B cell (primary cell): ENCODE measurements at regions of chr6 and their contacts with region 1.

Region 1: GRCh38 chr6:35452186-35453090 is at the start of gene FANCE:
- DNase-seq: peak; percentile 90
- ATAC-seq: peak; percentile 92
- H3K4me3 ChIP-seq: peak within 1 kb of the TSS; percentile 70 to 89 (median 79)
- H3K4me3 Mint-ChIP-seq: peak within 1 kb of the TSS; percentile 86
- H3K27ac ChIP-seq: peak within 1 kb of the TSS; percentile 23 to 25
- H3K27ac Mint-ChIP-seq: peak within 1 kb of the TSS; percentile 63
- H3K4me1 ChIP-seq: peaks cover 14 to 21% of the 10 kb centered on the region in 2 donors
- H3K4me1 Mint-ChIP-seq: peaks cover 33% of the 10 kb centered on the region
- H3K27me3 ChIP-seq: no peaks in the 10 kb centered on the region
- H3K27me3 Mint-ChIP-seq: no peaks in the 10 kb centered on the region
- CTCF ChIP-seq: no peak
- total RNA-seq, gene FANCE: 12.7 and 12.8 TPM in 2 replicates

Region 2: DNA sequence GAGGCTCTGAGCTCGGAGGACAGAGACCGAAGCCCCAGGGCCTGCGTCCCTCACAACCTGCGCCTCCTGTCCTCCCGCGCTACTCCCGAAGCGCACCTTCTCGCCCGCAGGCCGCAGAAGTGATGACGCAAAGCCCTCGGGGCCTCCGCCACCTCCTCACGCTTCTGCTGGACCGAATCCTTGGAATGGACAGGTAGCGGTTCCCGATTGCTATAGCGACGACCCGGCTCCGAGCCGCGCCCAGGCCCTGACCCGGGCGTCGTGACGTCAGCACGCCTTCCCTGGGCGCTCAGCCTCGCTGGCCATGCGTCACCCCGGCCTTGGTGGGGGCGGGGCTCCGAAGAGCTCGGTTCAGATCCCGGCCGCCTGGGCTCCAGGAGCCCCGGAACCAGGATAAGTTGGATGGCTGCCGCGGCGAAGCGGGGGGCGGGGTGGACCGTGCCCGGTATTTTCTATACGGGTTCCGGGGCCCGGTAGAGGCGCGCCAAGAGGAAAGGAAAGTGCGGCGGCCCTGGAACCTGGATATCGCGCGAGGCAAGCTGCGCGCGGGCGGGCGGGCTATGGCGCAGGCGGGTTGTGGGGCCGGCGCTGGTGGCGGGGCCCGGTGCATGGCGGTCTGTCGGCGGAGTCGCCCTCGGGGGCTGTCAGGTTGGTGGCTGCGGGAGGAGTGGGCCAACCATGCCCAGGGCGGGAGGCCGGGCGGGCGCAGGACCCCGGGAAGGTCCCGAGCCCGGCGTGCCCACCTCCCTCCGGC is 193.1 kb before region 1 on chr6 and contains the start of gene ZNF76:
- CTCF ChIA-PET with region 1: interaction called, 3 read pairs
- POLR2A ChIA-PET with region 1: interaction called, 4 read pairs
- intact Hi-C with region 1: loop called (anchors 1 kb)
- DNase-seq: peak; percentile 97
- ATAC-seq: peak; percentile 81
- H3K4me3 ChIP-seq: peak within 1 kb of the TSS; percentile 63 to 90 (median 81)
- H3K4me3 Mint-ChIP-seq: peak within 1 kb of the TSS; percentile 99
- H3K27ac ChIP-seq: peak within 1 kb of the TSS; percentile 97 to 98
- H3K27ac Mint-ChIP-seq: peak within 1 kb of the TSS; percentile 98
- H3K4me1 ChIP-seq: peaks cover 21 to 30% of the 10 kb centered on the region in 2 donors
- H3K4me1 Mint-ChIP-seq: peaks cover 47% of the 10 kb centered on the region
- H3K27me3 ChIP-seq: no peaks in the 10 kb centered on the region
- H3K27me3 Mint-ChIP-seq: no peaks in the 10 kb centered on the region
- CTCF ChIP-seq: no peak
- total RNA-seq, gene ZNF76: 96.9 and 107 TPM in 2 replicates

Region 3: GRCh38 chr6:35327349-35328027 is 125.0 kb before region 1 on chr6:
- CTCF ChIA-PET with region 1: interaction called, 35 read pairs
- POLR2A ChIA-PET with region 1: no interaction called
- intact Hi-C with region 1: no loop called
- DNase-seq: peak; percentile 80
- ATAC-seq: peak; percentile 87
- H3K4me3 ChIP-seq: no peak overlapping the region
- H3K4me3 Mint-ChIP-seq: no peak overlapping the region
- H3K27ac ChIP-seq: peak overlapping the region in 1 of 2 donors; percentile 11
- H3K27ac Mint-ChIP-seq: peak overlapping the region; percentile 74
- H3K4me1 ChIP-seq: peaks cover 11 to 15% of the 10 kb centered on the region in 2 donors
- H3K4me1 Mint-ChIP-seq: peaks cover 16% of the 10 kb centered on the region
- H3K27me3 ChIP-seq: no peaks in the 10 kb centered on the region
- H3K27me3 Mint-ChIP-seq: no peaks in the 10 kb centered on the region
- CTCF ChIP-seq: peak; percentile 76

Region 4: DNA sequence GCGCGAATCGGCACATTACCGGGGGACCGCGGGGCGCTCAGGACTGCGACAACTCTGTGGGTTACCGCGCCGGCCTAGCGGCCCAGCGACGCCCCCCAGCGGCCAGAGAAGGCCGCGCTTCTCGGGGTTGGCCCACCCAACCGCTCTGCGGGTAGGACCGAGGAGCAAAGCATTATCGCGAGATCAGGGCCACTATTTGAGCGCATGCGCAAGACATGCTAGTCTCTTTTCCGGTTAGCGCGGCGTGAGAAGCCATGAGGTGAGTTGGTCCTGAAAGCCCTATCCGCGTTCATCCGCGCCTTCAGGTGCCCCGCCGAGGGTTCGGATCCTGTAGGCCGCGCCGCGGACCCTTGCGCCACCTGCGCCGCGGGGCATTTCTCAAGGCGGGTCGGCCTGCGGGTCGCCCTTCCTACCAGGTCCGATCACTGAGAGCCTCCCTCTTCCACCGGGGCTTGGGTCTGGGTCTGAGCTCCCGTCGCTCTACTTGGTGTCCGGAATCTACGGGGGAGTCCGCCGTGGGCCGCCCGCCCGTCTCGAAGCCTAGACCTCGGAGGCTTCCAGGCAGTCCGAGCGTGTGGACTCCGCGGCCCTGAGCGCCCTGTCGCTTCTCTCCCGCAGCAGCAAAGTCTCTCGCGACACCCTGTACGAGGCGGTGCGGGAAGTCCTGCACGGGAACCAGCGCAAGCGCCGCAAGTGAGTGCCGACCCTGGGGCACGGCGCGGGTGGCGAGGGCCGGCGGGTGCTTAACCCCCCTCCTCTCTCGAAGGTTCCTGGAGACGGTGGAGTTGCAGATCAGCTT is 15.9 kb after region 1 on chr6 and contains the start of gene RPL10A:
- CTCF ChIA-PET with region 1: interaction called, 127 read pairs
- POLR2A ChIA-PET with region 1: interaction called, 7 read pairs
- intact Hi-C with region 1: loop called (anchors 1 kb)
- DNase-seq: peak; percentile 98
- ATAC-seq: peak; percentile 91
- H3K4me3 ChIP-seq: peak within 1 kb of the TSS; percentile 51 to 95 (median 87)
- H3K4me3 Mint-ChIP-seq: peak within 1 kb of the TSS; percentile 99
- H3K27ac ChIP-seq: peak within 1 kb of the TSS; percentile 91 to 92
- H3K27ac Mint-ChIP-seq: peak within 1 kb of the TSS; percentile 99
- H3K4me1 ChIP-seq: peaks cover 19 to 34% of the 10 kb centered on the region in 2 donors
- H3K4me1 Mint-ChIP-seq: peaks cover 42% of the 10 kb centered on the region
- H3K27me3 ChIP-seq: no peaks in the 10 kb centered on the region
- H3K27me3 Mint-ChIP-seq: no peaks in the 10 kb centered on the region
- CTCF ChIP-seq: peak; percentile 91
- total RNA-seq, gene RPL10A: 1,621 and 1,687 TPM in 2 replicates

Region 5: DNA sequence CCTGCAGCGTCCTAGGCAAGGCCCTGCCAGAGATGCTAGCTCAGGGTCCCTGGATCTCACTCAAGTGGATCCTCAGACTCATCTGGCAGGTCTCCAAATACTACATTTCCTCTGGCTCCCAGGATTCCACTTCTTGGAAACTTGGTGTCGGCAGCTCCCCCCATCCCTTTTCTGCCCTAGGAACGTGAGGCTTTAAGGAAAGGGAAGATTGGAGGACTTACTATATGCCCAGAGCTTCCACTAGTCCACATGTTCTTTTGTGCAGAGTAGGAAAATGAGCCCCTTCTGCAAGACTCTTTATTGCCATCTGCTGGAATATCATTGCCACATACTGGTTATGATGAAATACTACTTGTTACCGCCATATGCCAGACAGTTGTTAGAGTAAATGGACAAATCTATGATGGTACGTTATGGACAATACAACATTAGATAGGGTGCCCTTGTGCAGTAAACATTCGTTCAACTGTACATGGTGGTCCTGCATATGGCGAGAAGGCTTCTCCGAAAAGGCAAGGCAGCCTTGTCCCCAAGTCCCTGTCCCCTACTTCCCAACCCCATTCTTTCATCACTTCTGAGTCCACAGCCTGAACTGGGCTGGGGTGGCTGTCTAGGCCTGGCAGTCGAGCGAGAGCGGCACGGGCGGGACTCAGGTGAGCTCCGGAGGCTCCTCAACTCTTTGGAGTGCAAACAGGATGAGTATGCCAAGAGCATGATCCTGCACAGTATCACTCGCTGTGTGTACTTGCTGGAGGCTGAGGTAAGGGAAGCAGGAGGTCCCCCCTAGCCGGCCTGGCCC is 285.2 kb after region 1 on chr6:
- CTCF ChIA-PET with region 1: interaction called, 3 read pairs
- POLR2A ChIA-PET with region 1: no interaction called
- intact Hi-C with region 1: loop called (anchors 1 kb)
- DNase-seq: peak; percentile 81
- ATAC-seq: peak; percentile 69
- H3K4me3 ChIP-seq: no peak overlapping the region
- H3K4me3 Mint-ChIP-seq: no peak overlapping the region
- H3K27ac ChIP-seq: no peak overlapping the region
- H3K27ac Mint-ChIP-seq: peak overlapping the region; percentile 60
- H3K4me1 ChIP-seq: peaks cover 8 to 19% of the 10 kb centered on the region in 2 donors
- H3K4me1 Mint-ChIP-seq: peaks cover 22% of the 10 kb centered on the region
- H3K27me3 ChIP-seq: no peaks in the 10 kb centered on the region
- H3K27me3 Mint-ChIP-seq: no peaks in the 10 kb centered on the region
- CTCF ChIP-seq: peak; percentile 81

Region 6: GRCh38 chr6:35895560-35895959 is 443.1 kb after region 1 on chr6:
- CTCF ChIA-PET with region 1: no interaction called
- POLR2A ChIA-PET with region 1: no interaction called
- intact Hi-C with region 1: no loop called
- DNase-seq: no peak
- ATAC-seq: no peak
- H3K4me3 ChIP-seq: no peak overlapping the region
- H3K4me3 Mint-ChIP-seq: no peak overlapping the region
- H3K27ac ChIP-seq: no peak overlapping the region
- H3K27ac Mint-ChIP-seq: no peak overlapping the region
- H3K4me1 ChIP-seq: no peaks in the 10 kb centered on the region
- H3K4me1 Mint-ChIP-seq: peaks cover 21% of the 10 kb centered on the region
- H3K27me3 ChIP-seq: no peaks in the 10 kb centered on the region
- H3K27me3 Mint-ChIP-seq: no peaks in the 10 kb centered on the region
- CTCF ChIP-seq: no peak